ENCODE measurements at regions of chr2 and their contacts with region 1.

Region 1: GRCh38 chr2:187442378-187442777 is 5.7 kb downstream of the CALCRL start:
- DNase-seq: no peak
- ATAC-seq: no peak
- H3K4me3 ChIP-seq: no peak overlapping the region
- H3K27ac ChIP-seq: no peak overlapping the region
- H3K4me1 ChIP-seq: no peaks in the 10 kb centered on the region
- H3K27me3 ChIP-seq: no peaks in the 10 kb centered on the region
- CTCF ChIP-seq: peak in 2 of 3 experiments; percentile 3 to 5; a peak in 1 of 6 replicates
- EP300 ChIP-seq: no peak
- POLR2A ChIP-seq: no peak
- RAD21 ChIP-seq: no peak

Region 2: DNA sequence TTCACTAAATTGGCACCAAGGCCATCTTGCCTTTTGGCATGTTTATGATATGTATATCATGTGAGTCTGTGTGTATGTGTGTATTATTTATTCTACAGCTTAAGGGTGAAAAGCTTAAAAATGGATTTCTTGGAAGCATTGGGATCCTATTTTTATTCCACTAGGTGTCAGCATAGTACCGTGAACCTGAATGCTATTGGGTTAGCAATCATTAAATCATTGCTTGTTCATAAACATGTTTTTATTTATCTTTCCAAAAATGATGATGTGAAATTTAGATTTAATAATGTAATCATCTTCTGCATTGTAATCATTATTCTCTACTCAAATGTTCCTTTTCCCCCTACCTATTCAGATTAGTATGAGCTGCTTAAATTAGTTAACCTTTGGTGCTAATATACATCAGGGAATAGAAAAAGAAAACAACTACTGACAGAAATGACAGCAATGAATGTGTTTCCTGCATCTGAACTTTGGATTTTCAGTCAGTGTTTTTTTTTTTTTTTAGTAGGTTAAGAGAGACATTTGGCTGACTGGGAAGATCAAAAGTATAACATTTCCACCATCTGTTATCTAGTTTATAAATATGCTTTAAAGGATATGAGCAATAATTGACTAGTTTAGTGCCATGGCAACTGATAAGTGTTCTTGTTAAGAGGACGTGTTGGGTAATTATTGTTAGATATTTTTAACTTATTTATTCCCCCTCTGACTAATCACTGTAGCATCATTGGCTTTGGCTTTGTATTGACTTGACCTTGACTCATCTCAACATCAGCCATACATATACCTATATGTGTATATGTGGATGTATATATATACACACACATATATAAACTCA is 579.3 kb before region 1 on chr2:
- CTCF ChIA-PET with region 1: interaction called, 45 read pairs
- POLR2A ChIA-PET with region 1: no interaction called
- RAD21 ChIA-PET with region 1: interaction called, 42 read pairs
- SMC1A ChIA-PET with region 1: interaction called, 25 read pairs
- in situ Hi-C with region 1: loop called (anchors 5 kb)
- intact Hi-C with region 1: no loop called
- DNase-seq: no peak
- ATAC-seq: peak; percentile 79
- H3K4me3 ChIP-seq: no peak overlapping the region
- H3K27ac ChIP-seq: no peak overlapping the region
- H3K4me1 ChIP-seq: no peaks in the 10 kb centered on the region
- H3K27me3 ChIP-seq: no peaks in the 10 kb centered on the region
- CTCF ChIP-seq: peak; percentile 35 to 77 (median 48); a peak in 4 of 6 replicates
- EP300 ChIP-seq: no peak
- POLR2A ChIP-seq: no peak
- RAD21 ChIP-seq: peak; percentile 91

Region 3: DNA sequence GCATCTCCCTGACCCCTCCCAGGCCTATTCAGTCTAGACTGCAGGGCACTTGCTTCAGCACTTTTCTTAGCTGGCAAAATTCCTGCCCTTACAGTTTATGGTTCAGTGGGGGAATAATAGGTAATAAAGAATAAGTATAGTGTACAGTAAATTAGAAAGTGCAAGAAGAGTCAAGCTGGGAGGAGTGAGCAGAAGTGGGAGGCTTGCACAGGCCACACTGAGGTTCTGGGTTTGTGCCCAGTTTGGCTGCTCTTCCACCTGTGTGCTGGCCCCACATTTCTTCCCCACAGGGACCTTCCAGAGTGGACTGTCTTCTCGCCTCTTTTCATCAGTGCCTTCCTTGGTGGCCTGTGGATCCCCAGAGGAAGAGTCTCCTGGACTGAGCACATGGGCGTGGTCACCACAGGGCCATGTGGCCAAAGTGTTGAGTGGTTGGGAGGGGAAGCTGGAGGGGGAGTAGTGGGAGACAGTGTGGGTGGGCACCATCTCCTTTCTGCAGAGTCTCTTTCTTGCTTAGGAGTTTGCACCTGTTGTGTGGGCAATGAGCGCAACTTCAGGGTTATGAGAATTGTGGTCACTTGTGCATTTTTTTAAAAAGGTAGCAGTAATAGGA is 464.8 kb before region 1 on chr2:
- CTCF ChIA-PET with region 1: no interaction called
- POLR2A ChIA-PET with region 1: no interaction called
- RAD21 ChIA-PET with region 1: no interaction called
- SMC1A ChIA-PET with region 1: no interaction called
- in situ Hi-C with region 1: no loop called
- intact Hi-C with region 1: no loop called
- DNase-seq: no peak
- ATAC-seq: peak; percentile 61
- H3K4me3 ChIP-seq: no peak overlapping the region
- H3K27ac ChIP-seq: no peak overlapping the region
- H3K4me1 ChIP-seq: no peaks in the 10 kb centered on the region
- H3K27me3 ChIP-seq: no peaks in the 10 kb centered on the region
- CTCF ChIP-seq: no peak
- EP300 ChIP-seq: no peak
- POLR2A ChIP-seq: no peak
- RAD21 ChIP-seq: no peak

Region 4: GRCh38 chr2:187055463-187055862 is 386.9 kb before region 1 on chr2:
- CTCF ChIA-PET with region 1: no interaction called
- POLR2A ChIA-PET with region 1: no interaction called
- RAD21 ChIA-PET with region 1: no interaction called
- SMC1A ChIA-PET with region 1: no interaction called
- in situ Hi-C with region 1: no loop called
- intact Hi-C with region 1: loop called (anchors 10 kb)
- DNase-seq: no peak
- ATAC-seq: no peak
- H3K4me3 ChIP-seq: no peak overlapping the region
- H3K27ac ChIP-seq: no peak overlapping the region
- H3K4me1 ChIP-seq: no peaks in the 10 kb centered on the region
- H3K27me3 ChIP-seq: no peaks in the 10 kb centered on the region; a peak in 2 of 4 replicates
- CTCF ChIP-seq: no peak
- EP300 ChIP-seq: no peak
- POLR2A ChIP-seq: no peak
- RAD21 ChIP-seq: no peak

Region 5: DNA sequence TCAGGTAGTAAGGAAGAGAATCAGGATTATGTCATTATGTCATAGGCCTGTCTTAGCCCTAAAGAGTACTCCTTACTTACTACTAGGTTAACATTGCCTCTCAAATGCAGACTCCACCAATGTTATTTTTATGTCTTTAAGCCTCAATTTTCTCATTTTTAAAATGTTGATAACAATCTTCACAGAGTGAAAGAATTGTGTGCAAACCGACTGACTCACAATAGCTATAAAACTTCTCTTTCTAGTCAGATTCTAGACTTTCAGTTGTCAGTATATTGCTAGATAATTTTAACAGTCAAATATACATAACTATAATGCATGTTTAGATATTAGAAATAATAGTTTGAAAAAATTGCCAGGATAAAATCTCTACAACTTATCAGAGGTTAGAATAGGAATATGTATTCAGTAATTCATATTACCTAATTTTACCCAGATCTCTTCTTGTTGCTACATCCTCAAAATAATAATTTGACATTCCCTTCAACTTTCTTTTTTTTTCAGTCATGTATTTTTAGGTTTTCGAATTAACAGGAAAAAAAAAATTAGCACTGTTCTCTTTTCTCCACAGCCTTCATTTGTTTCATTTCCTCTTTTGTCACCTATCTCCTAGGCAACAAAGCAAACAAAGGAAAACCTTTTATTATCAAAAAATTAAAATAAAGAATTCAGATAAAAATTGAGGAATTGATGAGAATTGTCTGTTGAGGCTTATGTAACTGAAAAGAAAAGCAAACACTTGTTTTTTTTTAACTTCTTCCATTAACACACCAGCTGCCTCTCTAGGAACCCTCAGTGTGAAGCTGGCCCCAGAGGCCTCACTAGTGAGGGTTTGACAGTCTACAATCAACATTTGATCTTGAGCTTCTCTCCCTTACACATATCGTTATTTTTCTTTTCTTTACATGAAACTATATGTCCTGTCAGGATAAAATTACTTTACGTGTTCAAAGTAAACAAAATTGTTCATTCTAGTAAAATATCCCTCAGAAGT is 273.4 kb before region 1 on chr2:
- CTCF ChIA-PET with region 1: interaction called, 7 read pairs
- POLR2A ChIA-PET with region 1: interaction called, 4 read pairs
- RAD21 ChIA-PET with region 1: interaction called, 13 read pairs
- SMC1A ChIA-PET with region 1: interaction called, 25 read pairs
- in situ Hi-C with region 1: no loop called
- intact Hi-C with region 1: no loop called
- DNase-seq: peak; percentile 7
- ATAC-seq: peak; percentile 86
- H3K4me3 ChIP-seq: no peak overlapping the region
- H3K27ac ChIP-seq: peak overlapping the region; percentile 53
- H3K4me1 ChIP-seq: peaks cover 27% of the 10 kb centered on the region
- H3K27me3 ChIP-seq: no peaks in the 10 kb centered on the region
- CTCF ChIP-seq: no peak
- EP300 ChIP-seq: peak; percentile 74 to 88; a peak in 3 of 4 replicates
- POLR2A ChIP-seq: no peak
- RAD21 ChIP-seq: no peak

Region 6: DNA sequence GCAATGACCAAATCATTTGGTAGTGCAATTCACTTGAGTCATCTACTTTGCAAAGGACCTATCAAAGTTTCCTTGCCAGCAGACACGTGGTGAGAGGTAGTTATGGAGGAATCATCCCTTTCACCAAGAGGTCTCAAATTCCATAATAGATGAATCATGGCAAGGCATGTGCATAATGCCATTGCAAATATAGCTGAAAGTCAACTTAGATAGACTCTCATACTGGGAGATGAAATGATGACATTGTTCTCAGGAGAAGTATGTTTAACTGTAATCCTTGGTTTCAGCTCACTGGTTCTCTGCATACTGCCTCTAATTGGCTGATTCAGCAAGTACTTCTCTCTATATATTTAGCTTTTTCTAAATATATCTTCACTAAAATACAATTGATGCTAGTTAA is 51.5 kb before region 1 on chr2:
- CTCF ChIA-PET with region 1: no interaction called
- POLR2A ChIA-PET with region 1: no interaction called
- RAD21 ChIA-PET with region 1: interaction called, 14 read pairs
- SMC1A ChIA-PET with region 1: interaction called, 12 read pairs
- in situ Hi-C with region 1: no loop called
- intact Hi-C with region 1: no loop called
- DNase-seq: no peak
- ATAC-seq: no peak
- H3K4me3 ChIP-seq: no peak overlapping the region
- H3K27ac ChIP-seq: no peak overlapping the region
- H3K4me1 ChIP-seq: no peaks in the 10 kb centered on the region
- H3K27me3 ChIP-seq: no peaks in the 10 kb centered on the region
- CTCF ChIP-seq: no peak
- EP300 ChIP-seq: no peak
- POLR2A ChIP-seq: no peak
- RAD21 ChIP-seq: no peak

Region 7: DNA sequence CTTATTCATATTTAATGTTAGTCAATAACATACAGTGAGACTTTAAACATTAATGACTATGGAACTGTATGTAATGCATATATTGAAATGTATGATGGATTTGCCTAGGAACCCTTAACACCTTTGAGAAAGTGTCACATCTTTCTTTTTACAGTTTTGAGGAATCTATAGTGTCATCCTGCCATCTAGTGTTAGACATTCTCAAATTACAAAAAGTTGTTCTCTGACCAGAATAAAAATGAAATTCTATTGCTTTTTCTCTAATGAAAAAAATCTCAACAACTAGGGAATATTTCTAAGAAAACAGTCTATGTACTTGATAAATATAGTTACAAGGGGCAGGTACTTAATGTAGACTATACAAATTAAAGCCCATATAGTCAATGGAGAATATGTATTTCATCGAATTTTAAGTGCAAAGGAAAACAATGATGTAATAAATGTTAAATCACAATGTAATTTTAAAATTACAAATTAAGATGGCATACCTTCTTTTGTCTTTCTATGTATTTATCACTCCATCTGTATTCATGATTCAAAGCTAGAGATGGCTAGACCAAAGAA is 10.8 kb after region 1 on chr2:
- CTCF ChIA-PET with region 1: interaction called, 9 read pairs
- POLR2A ChIA-PET with region 1: interaction called, 5 read pairs
- RAD21 ChIA-PET with region 1: interaction called, 11 read pairs
- SMC1A ChIA-PET with region 1: interaction called, 9 read pairs
- in situ Hi-C with region 1: no loop called
- intact Hi-C with region 1: no loop called
- DNase-seq: no peak
- ATAC-seq: 0 out of 3 replicates have a peak, but pooled peaks have one; percentile 11
- H3K4me3 ChIP-seq: no peak overlapping the region
- H3K27ac ChIP-seq: no peak overlapping the region
- H3K4me1 ChIP-seq: no peaks in the 10 kb centered on the region
- H3K27me3 ChIP-seq: no peaks in the 10 kb centered on the region
- CTCF ChIP-seq: peak; percentile 8 to 67 (median 27); a peak in 4 of 6 replicates
- EP300 ChIP-seq: no peak
- POLR2A ChIP-seq: no peak
- RAD21 ChIP-seq: peak; percentile 81